ENCODE measurements at regions of chr9 and their contacts with region 1.

Region 1: GRCh38 chr9:136807281-136808074 is at the start of gene RABL6:
- DNase-seq: no peak
- H3K4me3 ChIP-seq: peak within 1 kb of the TSS; percentile 78
- CTCF ChIP-seq: no peak

Region 2: DNA sequence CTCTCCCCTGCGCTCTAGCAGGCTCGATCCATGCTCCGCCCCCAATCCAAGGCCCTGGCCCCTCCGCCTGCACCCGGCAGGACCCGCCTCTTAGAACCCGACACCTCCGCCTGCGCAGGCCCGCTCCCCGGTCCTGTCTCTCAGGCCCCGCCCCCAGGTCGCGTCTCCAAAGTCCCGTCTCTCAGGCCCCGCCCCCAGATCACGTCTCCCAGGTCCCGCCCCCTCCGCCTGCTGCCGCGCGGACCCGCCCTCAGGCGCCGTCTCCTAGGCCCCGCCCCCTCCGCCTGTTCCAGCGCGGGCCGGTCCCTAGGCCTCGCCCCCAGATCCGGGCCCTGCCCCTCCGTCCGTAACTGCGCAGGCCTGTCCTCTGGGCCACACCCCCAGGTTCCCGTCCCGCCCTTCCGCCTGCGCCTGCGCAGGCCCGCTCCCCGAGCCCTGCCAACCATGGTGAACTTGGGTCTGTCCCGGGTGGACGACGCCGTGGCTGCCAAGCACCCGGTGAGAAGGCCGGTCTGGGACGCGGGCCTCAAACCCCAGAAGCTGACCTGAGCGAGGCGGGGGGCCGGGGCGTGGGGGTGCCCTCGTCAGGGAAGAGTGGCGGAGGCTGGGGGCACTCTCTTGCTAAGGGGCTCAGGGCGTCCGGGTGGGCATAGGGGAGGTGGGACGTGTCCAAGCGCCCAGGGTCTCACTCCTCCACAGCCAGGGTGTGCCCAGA is 16.4 kb before region 1 on chr9 and contains the start of gene TMEM141:
- CTCF ChIA-PET with region 1: interaction called, 69 read pairs
- POLR2A ChIA-PET with region 1: no interaction called
- DNase-seq: peak; percentile 93
- H3K4me3 ChIP-seq: peak within 1 kb of the TSS; percentile 94
- CTCF ChIP-seq: no peak

Region 3: GRCh38 chr9:136820971-136821825 is 13.7 kb after region 1 on chr9:
- CTCF ChIA-PET with region 1: interaction called, 12 read pairs
- POLR2A ChIA-PET with region 1: interaction called, 3 read pairs
- DNase-seq: no peak
- H3K4me3 ChIP-seq: no peak overlapping the region
- CTCF ChIP-seq: no peak

Region 4: DNA sequence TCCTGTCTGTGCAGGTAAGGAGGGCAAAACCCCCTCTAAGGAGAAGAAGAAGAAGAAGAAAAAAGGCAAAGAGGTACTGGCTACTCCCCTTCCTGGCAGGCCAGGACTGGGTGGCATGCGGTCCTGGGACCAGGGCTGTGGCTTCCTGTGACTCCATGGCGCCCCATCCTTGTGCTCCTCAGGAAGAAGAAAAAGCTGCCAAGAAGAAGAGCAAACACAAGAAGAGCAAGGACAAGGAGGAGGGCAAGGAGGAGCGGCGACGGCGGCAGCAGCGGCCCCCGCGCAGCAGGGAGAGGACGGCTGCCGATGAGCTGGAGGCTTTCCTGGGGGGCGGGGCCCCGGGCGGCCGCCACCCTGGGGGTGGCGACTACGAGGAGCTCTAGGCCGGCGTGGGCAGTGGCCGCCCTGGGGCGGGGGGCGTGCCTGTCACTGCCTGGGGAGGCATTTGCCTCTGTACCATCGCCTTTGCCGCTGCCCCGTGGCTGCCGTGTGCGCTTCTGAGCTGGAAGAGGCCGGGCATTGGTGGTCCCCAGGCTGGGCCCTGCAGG is 32.7 kb after region 1 on chr9:
- CTCF ChIA-PET with region 1: interaction called, 35 read pairs
- POLR2A ChIA-PET with region 1: interaction called, 4 read pairs
- DNase-seq: no peak
- H3K4me3 ChIP-seq: no peak overlapping the region
- CTCF ChIP-seq: no peak

Region 5: GRCh38 chr9:137070201-137070905 is 262.9 kb after region 1 on chr9 and contains the start of gene SAPCD2:
- CTCF ChIA-PET with region 1: no interaction called
- POLR2A ChIA-PET with region 1: no interaction called
- DNase-seq: no peak
- H3K4me3 ChIP-seq: peak within 1 kb of the TSS; percentile 53
- CTCF ChIP-seq: no peak